Tibial artery (tissue), 4 donors: ENCODE measurements at regions of chr3 and their contacts with region 1.

Region 1: GRCh38 chr3:53072653-53073552 is 27.0 kb upstream of the SFMBT1 start:
- DNase-seq: peak; percentile 81 to 88
- H3K4me3 ChIP-seq: peak overlapping the region; percentile 70 to 83
- H3K27ac ChIP-seq: peak overlapping the region; percentile 77 to 86
- H3K4me1 ChIP-seq: peaks cover 0 to 23% (median 13%) of the 10 kb centered on the region in 4 donors
- H3K27me3 ChIP-seq: no peaks in the 10 kb centered on the region
- CTCF ChIP-seq: peak; percentile 89 to 96

Region 2: GRCh38 chr3:52742418-52743041 is 330.4 kb before region 1 on chr3:
- intact Hi-C with region 1: loop called (anchors 2 kb)
- DNase-seq: no peak
- H3K4me3 ChIP-seq: no peak overlapping the region
- H3K27ac ChIP-seq: no peak overlapping the region
- H3K4me1 ChIP-seq: no peaks in the 10 kb centered on the region
- H3K27me3 ChIP-seq: no peaks in the 10 kb centered on the region
- CTCF ChIP-seq: peak; percentile 59 to 63

Region 3: GRCh38 chr3:52851348-52851747 is 221.6 kb before region 1 on chr3:
- intact Hi-C with region 1: loop called (anchors 10 kb)
- DNase-seq: peak in 1 of 2 donors; percentile 19
- H3K4me3 ChIP-seq: no peak overlapping the region
- H3K27ac ChIP-seq: no peak overlapping the region
- H3K4me1 ChIP-seq: peaks cover 0 to 22% (median 6%) of the 10 kb centered on the region in 4 donors
- H3K27me3 ChIP-seq: no peaks in the 10 kb centered on the region
- CTCF ChIP-seq: peak; percentile 47 to 64

Region 4: DNA sequence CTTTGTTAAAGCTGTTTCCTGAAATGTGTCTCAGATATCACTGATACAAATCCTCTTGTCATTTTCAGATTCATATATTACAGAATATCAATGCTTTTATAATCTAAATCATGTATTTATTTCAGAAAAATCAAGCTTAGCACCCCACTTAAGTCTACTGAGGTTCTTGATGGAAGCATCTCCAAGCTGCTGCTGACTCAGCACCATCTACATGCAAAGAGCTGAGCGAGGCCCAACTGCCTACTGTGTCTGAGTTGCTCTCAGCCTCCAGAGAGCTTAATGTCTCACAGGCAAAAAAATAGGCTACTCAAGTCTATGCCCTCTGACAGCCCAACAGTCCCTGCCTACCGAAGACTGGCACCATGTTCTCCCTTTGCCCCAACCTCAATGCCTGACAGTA is 146.3 kb before region 1 on chr3:
- intact Hi-C with region 1: no loop called
- DNase-seq: no peak
- H3K4me3 ChIP-seq: no peak overlapping the region
- H3K27ac ChIP-seq: no peak overlapping the region
- H3K4me1 ChIP-seq: no peaks in the 10 kb centered on the region
- H3K27me3 ChIP-seq: no peaks in the 10 kb centered on the region
- CTCF ChIP-seq: no peak

Region 5: DNA sequence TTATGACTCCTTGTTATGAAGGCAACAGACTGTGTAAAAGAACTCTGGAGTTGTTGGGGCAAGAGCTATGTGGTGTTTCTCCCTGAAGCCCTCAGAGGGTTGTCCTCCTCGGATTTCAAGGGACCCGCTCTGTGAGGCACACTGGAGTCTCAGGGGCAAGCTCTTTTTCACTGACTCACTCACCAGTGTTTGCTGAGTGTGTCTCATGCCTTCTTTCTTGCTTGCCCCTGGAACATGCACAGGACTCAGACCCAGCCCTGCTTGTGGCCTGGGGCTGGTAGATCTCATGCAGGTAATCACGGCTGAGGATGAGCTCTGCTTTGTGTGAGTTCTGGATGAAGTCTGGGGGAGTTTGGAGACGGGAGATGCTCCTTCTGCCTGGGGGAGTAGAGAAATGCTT is 515.2 kb after region 1 on chr3:
- intact Hi-C with region 1: no loop called
- DNase-seq: no peak
- H3K4me3 ChIP-seq: no peak overlapping the region
- H3K27ac ChIP-seq: no peak overlapping the region
- H3K4me1 ChIP-seq: no peaks in the 10 kb centered on the region
- H3K27me3 ChIP-seq: no peaks in the 10 kb centered on the region
- CTCF ChIP-seq: no peak